ENCODE measurements at regions of chr6 and their contacts with region 1.

Region 1: DNA sequence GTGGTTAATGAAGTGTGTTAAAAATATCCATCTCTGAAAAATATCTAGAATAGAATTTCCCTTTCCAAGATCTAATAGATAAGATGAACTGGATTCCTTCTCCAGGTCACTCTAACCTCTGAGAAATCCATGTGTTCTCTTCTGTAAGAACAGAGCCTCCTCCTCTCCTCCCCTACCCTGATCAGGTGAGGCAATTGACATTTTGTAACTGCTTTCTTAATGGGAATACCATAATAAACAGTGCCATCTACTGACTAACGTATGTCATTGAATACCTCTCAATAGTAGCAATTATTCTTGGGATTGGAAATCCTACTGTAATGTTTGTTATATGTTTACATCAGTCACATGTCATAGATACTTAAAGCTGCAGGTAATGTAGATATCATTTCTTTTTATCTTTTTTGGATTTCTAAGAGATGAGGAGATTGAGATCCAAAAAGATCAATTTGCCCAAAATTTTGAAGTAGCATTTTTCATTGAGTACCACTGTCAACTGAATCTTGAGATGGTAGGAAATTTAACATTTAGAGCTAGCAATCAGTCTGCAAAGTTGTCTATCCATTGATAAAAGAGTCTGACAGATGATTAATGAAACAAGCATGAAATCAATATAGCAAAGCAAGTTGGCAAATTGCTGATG is 365.8 kb upstream of the HSF2 start:
- DNase-seq: no peak
- ATAC-seq: peak; percentile 85
- H3K4me3 ChIP-seq: no peak overlapping the region
- H3K27ac ChIP-seq: no peak overlapping the region
- H3K4me1 ChIP-seq: no peaks in the 10 kb centered on the region
- H3K27me3 ChIP-seq: no peaks in the 10 kb centered on the region

Region 2: GRCh38 chr6:121321282-121321681 is 712.4 kb before region 1 on chr6:
- intact Hi-C with region 1: loop called in 1 of 2 experiments (anchors 5 kb)
- DNase-seq: no peak
- ATAC-seq: no peak
- H3K4me3 ChIP-seq: no peak overlapping the region
- H3K27ac ChIP-seq: no peak overlapping the region
- H3K4me1 ChIP-seq: no peaks in the 10 kb centered on the region
- H3K27me3 ChIP-seq: no peaks in the 10 kb centered on the region

Region 3: GRCh38 chr6:121334299-121335086 is 699.2 kb before region 1 on chr6 and contains the start of gene TBC1D32:
- intact Hi-C with region 1: loop called in 1 of 2 experiments (anchors 10 kb)
- DNase-seq: peak; percentile 96 to 98
- ATAC-seq: peak; percentile 100
- H3K4me3 ChIP-seq: peak within 1 kb of the TSS; percentile 55 to 86
- H3K27ac ChIP-seq: peak within 1 kb of the TSS; percentile 80 to 86
- H3K4me1 ChIP-seq: no peaks in the 10 kb centered on the region
- H3K27me3 ChIP-seq: no peaks in the 10 kb centered on the region
- total RNA-seq, gene TBC1D32: 4.5 to 7.5 TPM

Region 4: DNA sequence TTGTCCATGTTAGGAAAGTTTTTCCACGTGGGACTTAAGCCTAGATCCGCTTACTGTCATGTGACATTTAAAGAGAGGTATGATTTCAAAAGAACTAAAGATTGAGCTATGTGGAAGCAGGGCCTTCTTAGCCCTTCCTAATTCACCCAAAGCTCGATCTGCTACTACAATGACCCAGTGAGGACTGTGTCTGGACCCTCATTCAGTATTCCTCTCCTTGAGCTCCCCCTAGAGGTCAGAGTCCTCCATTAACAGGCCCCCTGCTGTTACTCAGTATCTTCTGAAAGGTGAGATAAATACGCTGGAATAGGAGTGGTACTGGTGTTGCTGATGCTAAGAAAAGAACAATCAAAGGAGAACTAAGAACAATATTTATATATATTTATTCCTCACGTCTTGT is 184.2 kb before region 1 on chr6:
- intact Hi-C with region 1: loop called in 1 of 2 experiments (anchors 10 kb)
- DNase-seq: peak in 1 of 2 donors; percentile 51
- ATAC-seq: peak; percentile 89
- H3K4me3 ChIP-seq: no peak overlapping the region
- H3K27ac ChIP-seq: no peak overlapping the region
- H3K4me1 ChIP-seq: peaks cover 1 to 4% of the 10 kb centered on the region in 2 donors
- H3K27me3 ChIP-seq: no peaks in the 10 kb centered on the region

Region 5: DNA sequence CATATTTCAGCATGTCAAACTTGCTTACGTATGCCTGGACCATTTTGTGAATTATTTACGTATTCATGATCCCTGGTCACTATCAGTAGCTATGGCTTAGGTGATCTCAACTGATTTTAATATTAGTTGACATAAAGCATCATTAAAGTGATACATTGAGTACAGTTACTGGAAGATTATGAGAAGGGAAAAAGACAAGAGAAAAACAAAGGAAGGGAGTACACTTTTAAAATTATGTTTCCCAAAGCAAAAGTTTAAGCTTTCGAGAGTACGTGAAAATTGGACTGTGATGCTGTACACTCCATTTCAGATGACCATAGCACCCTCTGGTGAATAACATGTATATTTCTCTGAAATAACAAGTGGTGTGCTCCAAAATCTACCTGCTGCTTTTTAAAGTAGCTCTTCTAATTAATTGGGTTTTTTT is 150.8 kb after region 1 on chr6:
- intact Hi-C with region 1: loop called in 1 of 2 experiments (anchors 10 kb)
- DNase-seq: no peak
- ATAC-seq: peak; percentile 65
- H3K4me3 ChIP-seq: peak overlapping the region; percentile 36 to 48
- H3K27ac ChIP-seq: no peak overlapping the region
- H3K4me1 ChIP-seq: no peaks in the 10 kb centered on the region
- H3K27me3 ChIP-seq: no peaks in the 10 kb centered on the region

Region 6: GRCh38 chr6:123655521-123656306 is 1622.1 kb after region 1 on chr6:
- intact Hi-C with region 1: no loop called
- DNase-seq: no peak
- ATAC-seq: no peak
- H3K4me3 ChIP-seq: no peak overlapping the region
- H3K27ac ChIP-seq: no peak overlapping the region
- H3K4me1 ChIP-seq: no peaks in the 10 kb centered on the region
- H3K27me3 ChIP-seq: no peaks in the 10 kb centered on the region

Measured in aorta (tissue), 5 donors.